ENCODE measurements at regions of chr1 and their contacts with region 1.

Region 1: DNA sequence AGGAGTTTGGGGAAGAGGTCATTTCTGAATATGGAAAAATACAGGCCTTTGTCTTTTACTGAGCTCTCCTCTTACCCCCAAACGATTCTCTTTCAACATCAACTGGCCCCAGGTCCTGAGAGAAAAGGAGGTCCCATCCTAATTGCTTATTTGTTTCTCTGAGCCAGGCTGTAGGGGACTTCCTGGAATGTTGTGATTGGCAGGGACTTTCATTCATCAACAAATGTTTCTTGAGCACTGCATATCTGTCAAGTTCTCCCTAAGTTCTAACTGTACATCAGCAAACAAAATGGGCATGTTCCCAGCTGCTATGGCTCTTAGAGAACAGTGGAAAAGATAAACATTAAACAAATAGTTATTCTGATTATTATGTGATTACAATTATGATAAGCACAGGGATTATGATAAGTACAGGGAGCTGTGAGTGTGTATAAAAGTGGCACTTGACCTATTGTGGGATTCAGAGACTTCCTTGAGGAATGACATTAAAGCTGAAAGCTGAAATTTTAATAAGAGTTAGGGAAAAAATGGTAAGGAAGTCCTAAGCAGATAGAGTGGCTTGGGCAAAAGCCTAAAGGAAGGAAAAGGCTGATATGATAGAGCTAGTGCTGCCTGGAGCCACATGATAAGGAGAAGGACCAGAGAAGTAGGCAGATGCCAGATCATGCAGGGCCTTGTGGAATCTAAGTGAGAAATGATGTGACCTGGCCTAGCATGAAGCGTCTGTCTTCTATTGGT is 11.6 kb downstream of the GPX7 start:
- DNase-seq: no peak
- H3K4me3 ChIP-seq: no peak overlapping the region
- H3K27ac ChIP-seq: no peak overlapping the region
- H3K4me1 ChIP-seq: peaks cover 3% of the 10 kb centered on the region
- CTCF ChIP-seq: no peak

Region 2: DNA sequence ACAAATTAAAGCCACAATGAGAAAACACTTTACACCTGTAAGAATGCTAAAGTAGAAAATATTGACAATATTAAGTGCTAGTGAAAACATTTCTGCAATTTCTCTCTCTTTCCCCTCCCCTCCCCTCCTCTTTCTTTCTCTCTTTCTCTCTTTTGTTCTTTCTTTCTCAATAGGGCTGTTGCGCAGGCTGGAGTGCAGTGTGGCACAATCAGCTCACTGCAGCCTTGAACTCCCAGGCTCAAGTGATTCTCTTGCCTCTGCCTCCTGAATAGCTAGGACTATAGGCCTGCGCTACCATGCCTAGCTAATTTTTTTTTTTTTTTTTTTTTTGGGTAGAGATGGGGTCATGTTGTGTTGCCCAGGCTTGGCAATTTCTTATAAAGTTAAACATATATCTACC is 13.2 kb after region 1 on chr1:
- CTCF ChIA-PET with region 1: no interaction called
- POLR2A ChIA-PET with region 1: interaction called, 11 read pairs
- intact Hi-C with region 1: no loop called
- DNase-seq: no peak
- H3K4me3 ChIP-seq: no peak overlapping the region
- H3K27ac ChIP-seq: no peak overlapping the region
- H3K4me1 ChIP-seq: peaks cover 16% of the 10 kb centered on the region
- CTCF ChIP-seq: no peak